IMR-90 (cell line): ENCODE measurements at regions of chr7 and their contacts with region 1.

Region 1: DNA sequence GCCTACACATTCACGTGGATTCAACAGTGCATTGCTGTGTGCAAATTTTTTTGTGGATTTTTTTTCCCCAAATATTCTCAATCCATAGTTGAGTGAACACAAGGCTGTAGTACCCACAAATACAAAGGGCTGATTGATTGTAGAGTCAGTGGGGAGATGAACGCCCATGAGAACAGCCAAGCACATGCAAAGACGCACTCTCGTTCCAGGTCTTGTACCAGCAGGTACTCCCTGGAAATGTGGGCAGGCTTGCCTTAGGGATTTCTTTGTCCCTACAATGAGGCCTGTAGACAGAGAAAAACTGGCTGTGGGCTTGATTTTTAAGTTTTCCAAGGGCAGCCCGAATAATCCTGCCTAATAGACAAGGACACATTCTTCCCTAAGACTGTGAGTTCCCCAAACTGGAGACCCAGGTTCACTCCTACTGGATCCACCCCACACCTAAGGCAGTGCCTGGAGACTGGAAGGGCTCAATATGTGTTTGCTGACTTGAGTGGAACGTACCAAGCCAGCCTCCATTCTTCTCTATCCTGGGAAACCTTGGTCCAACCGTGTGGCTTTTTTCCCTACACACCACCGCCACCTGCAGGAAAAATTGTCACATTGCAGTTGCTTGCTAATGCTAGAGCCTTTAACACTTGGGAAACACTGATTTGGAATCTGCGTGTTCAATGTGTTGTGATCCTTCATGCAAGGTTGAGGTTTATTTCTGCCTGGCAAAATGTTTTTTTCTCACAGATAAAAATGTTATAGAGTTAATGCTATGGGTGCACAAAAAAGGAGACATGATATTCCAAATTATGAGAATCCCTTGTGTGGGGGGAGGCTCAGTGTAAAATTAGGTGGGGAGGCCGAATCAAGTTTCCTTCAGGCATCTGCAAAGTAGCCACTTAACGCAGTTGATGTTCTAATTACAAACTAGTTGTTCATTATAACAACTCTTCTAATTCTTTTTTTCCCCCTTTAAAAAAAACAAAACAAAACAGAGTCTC is 49.3 kb downstream of the PPP1R17 start:
- DNase-seq: peak; percentile 51
- ATAC-seq: peak; percentile 99
- H3K4me3 ChIP-seq: no peak overlapping the region
- H3K27ac ChIP-seq: no peak overlapping the region
- H3K4me1 ChIP-seq: no peaks in the 10 kb centered on the region
- H3K27me3 ChIP-seq: no peaks in the 10 kb centered on the region
- CTCF ChIP-seq: peak; percentile 89
- POLR2A ChIP-seq: no peak
- RAD21 ChIP-seq: peak; percentile 83

Region 2: DNA sequence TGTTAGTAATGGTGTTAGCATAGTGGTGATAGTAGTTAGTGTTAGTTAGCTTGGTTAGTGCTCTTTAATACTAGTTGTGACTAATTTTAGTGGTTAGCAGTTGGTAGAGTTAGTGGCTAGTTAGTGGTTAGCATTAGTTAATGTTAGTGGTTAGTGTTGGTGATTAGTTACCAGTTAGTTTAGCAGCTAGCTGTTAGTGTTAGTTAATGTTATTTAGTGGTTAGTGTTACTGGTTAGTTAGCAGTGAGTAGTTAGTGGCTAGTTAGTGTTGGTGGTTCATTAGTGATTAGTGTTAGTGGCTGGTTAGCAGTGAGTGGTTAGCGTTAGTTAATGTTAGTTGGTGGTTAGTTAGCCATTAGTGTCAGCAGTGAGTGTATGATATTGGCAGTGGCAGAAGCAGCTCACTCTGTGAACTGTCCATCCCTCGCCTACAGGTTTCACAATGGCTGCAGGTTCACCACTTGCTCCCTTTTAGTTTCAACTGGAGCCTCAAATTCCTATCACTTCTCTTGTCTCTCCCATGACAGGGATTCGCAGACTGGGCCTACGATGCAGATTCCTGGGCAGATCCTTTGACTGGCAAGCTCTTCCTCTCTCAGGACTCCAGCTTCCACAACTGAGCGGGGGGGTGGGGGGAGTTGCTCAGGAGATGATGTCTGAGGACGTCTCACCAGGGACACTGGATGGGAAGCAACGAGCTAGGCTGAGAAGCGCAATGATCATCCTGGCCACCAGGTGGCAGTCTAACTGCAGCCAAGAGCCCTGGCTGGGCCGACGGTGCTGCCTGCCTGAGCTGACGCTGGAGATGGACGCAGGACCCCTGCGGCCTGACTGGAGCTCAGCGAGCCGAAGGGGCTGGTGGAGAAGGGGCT is 753.0 kb before region 1 on chr7:
- CTCF ChIA-PET with region 1: no interaction called
- POLR2A ChIA-PET with region 1: no interaction called
- dilution Hi-C with region 1: no loop called
- in situ Hi-C with region 1: no loop called
- intact Hi-C with region 1: loop called (anchors 1 kb)
- DNase-seq: peak; percentile 69
- ATAC-seq: peak; percentile 100
- H3K4me3 ChIP-seq: no peak overlapping the region
- H3K27ac ChIP-seq: no peak overlapping the region
- H3K4me1 ChIP-seq: no peaks in the 10 kb centered on the region
- H3K27me3 ChIP-seq: peaks cover 39% of the 10 kb centered on the region
- CTCF ChIP-seq: peak; percentile 86
- POLR2A ChIP-seq: no peak
- RAD21 ChIP-seq: peak; percentile 84

Region 3: DNA sequence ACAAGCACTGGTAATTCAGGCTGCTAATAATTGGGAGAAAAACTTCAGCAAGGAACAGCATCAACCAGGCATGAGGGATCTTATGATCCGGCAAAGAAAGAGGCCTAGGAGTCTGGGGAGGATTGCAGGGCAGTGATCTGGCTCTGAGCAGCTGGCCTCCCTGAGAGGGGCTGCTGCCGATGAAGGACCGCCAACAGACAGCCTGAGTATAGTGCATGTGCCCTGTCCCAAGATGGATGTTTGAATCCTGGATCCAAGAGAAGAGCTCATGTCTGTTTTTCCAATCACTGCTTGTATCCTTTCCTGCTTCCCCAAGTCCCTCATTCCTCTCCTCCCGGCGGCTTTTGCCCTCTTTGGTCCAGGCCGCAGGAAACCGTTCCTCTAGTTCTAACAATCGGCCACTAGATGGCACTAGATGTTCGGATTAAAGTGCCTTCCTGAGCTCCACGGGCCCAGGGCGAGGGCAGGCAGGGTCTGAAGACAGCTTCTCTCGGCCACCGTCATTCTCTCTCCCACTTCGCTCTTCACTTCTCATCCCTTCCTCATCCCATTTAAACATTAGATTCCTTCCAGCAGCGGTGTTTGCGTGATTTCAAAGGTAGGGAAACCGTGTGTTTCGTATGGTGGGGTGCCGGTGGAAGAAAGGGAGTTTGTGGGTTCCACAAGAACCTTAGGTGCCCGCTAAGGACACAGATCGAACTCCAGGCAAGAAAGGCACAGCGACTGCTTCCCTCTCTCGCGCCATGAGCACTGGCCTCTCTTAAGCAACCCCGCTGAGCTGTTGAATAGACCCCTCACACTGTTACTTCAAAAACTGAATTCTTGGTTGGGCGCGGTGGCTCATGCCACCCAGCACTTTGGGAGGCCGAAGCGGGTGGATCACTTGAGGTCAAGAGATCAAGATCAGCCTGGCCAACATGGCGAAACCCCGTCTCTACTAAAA is 601.8 kb before region 1 on chr7:
- CTCF ChIA-PET with region 1: interaction called, 3 read pairs
- POLR2A ChIA-PET with region 1: no interaction called
- dilution Hi-C with region 1: no loop called
- in situ Hi-C with region 1: no loop called
- intact Hi-C with region 1: loop called (anchors 1 kb)
- DNase-seq: peak; percentile 54
- ATAC-seq: peak; percentile 100
- H3K4me3 ChIP-seq: no peak overlapping the region
- H3K27ac ChIP-seq: no peak overlapping the region
- H3K4me1 ChIP-seq: no peaks in the 10 kb centered on the region
- H3K27me3 ChIP-seq: no peaks in the 10 kb centered on the region; the same call in 1 of the 2 replicates
- CTCF ChIP-seq: peak; percentile 68
- POLR2A ChIP-seq: no peak
- RAD21 ChIP-seq: peak; percentile 62

Region 4: DNA sequence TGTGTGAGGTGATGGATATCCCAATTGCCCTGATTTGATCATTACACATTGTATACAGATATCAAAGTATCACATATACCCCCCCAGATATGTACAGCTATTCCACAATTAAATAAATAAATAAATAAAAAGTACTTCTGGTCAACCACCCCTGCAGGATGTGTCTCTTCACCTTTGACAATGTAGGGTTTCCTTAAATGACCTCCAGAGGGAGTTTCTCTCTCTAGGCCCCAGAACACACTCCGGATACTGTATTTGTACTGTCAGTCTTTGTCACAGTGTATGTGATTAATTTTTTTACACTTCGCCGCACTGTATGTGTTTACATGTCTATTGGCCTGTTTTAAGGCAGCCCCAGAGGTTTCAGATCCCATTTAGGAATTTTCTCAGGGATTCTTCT is 560.6 kb before region 1 on chr7:
- CTCF ChIA-PET with region 1: no interaction called
- POLR2A ChIA-PET with region 1: no interaction called
- dilution Hi-C with region 1: no loop called
- in situ Hi-C with region 1: no loop called
- intact Hi-C with region 1: no loop called
- DNase-seq: no peak
- ATAC-seq: no peak
- H3K4me3 ChIP-seq: no peak overlapping the region
- H3K27ac ChIP-seq: no peak overlapping the region
- H3K4me1 ChIP-seq: no peaks in the 10 kb centered on the region
- H3K27me3 ChIP-seq: no peaks in the 10 kb centered on the region
- CTCF ChIP-seq: no peak
- POLR2A ChIP-seq: no peak
- RAD21 ChIP-seq: no peak

Region 5: DNA sequence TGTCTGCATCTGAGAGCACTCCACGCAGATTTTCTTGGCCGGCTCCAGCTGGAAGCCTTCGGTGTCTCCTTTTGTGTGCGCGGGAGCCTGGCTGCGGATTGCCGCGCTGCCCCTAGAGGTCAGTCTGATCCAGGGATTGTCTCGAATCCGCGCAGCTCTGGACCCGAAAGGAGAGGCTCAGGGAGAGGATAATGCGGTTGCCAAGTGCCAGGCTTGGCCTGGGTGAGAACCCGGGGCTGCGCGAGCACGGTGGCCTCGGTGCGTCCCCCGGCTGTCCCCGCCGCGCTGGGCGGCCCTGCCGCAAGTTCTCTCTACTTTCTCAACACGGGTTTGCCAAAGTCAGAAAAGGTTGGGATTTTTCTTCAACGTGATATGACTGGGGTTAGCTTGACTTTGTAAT is 543.3 kb before region 1 on chr7:
- CTCF ChIA-PET with region 1: no interaction called
- POLR2A ChIA-PET with region 1: no interaction called
- dilution Hi-C with region 1: no loop called
- in situ Hi-C with region 1: no loop called
- intact Hi-C with region 1: loop called (anchors 5 kb)
- DNase-seq: peak; percentile 16
- ATAC-seq: peak; percentile 99
- H3K4me3 ChIP-seq: no peak overlapping the region
- H3K27ac ChIP-seq: no peak overlapping the region
- H3K4me1 ChIP-seq: no peaks in the 10 kb centered on the region
- H3K27me3 ChIP-seq: no peaks in the 10 kb centered on the region
- CTCF ChIP-seq: peak; percentile 50
- POLR2A ChIP-seq: no peak
- RAD21 ChIP-seq: peak; percentile 48

Region 6: DNA sequence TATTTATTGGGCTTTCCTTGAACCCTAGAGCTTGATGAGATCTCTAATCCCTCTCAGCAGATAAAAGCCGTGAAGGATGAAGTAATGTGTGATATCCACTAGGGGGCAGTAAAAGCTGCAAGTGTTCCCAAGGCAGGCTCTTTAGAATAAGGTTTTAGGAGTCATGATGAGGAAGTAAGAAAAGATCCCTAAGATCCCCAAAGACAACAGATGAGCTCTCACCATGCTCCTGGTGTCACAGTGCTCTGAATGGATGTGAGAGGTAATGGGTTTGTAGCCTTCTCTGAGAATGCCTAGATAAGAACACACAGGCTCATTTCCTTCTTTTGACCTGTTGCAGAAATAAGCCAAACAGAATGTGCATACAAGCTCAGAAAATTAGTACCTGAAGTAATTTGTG is 292.8 kb before region 1 on chr7:
- CTCF ChIA-PET with region 1: no interaction called
- POLR2A ChIA-PET with region 1: no interaction called
- dilution Hi-C with region 1: no loop called
- in situ Hi-C with region 1: loop called (anchors 10 kb)
- intact Hi-C with region 1: loop called (anchors 1 kb)
- DNase-seq: peak; percentile 45
- ATAC-seq: peak; percentile 81
- H3K4me3 ChIP-seq: no peak overlapping the region
- H3K27ac ChIP-seq: no peak overlapping the region
- H3K4me1 ChIP-seq: no peaks in the 10 kb centered on the region
- H3K27me3 ChIP-seq: no peaks in the 10 kb centered on the region
- CTCF ChIP-seq: peak; percentile 67
- POLR2A ChIP-seq: no peak
- RAD21 ChIP-seq: peak; percentile 58

Region 7: DNA sequence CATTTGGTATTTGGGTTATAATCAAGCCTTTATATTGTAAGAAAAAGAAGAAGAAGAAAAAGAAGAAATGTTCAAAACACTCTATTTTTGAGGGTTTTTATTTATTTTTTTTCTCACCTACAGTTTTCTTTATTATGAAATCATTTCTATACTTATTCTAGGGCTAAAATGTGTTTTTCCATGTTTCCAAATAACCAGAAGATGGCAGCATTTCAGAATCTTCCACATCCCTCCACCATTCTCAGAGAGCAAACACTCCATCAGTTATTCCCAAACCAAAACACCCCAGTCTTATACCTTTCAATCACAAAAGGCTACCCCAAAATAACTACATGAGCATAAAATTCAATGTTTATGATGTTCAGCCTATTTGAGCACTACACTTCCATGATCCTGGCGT is 88.0 kb before region 1 on chr7:
- CTCF ChIA-PET with region 1: no interaction called
- POLR2A ChIA-PET with region 1: no interaction called
- dilution Hi-C with region 1: no loop called
- in situ Hi-C with region 1: no loop called
- intact Hi-C with region 1: loop called (anchors 1 kb)
- DNase-seq: peak; percentile 1
- ATAC-seq: no peak
- H3K4me3 ChIP-seq: no peak overlapping the region
- H3K27ac ChIP-seq: no peak overlapping the region
- H3K4me1 ChIP-seq: no peaks in the 10 kb centered on the region
- H3K27me3 ChIP-seq: no peaks in the 10 kb centered on the region; the same call in 1 of the 2 replicates
- CTCF ChIP-seq: peak; percentile 27; the same call in 1 of the 2 replicates
- POLR2A ChIP-seq: no peak
- RAD21 ChIP-seq: peak; percentile 23; the same call in 1 of the 2 replicates

Region 8: DNA sequence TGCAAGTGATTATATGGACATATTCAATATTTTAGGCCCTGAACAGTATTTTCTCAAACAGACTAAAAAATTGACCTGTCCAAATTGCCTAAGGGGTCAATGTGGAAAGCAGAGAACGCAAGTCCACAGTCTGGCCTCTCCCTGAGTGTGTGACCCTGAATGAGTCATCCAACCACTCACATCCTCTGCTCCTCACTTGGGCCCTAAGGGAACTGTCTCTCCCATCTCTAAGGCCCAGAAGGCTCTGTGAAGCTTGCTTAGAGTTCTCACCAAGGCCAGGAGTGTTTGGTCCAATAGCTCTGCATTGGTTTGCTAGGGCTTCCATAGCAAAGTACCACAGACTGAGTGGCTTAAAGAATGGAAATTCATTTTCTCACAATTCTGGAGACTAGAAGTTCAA is 598.8 kb after region 1 on chr7:
- CTCF ChIA-PET with region 1: interaction called, 10 read pairs
- POLR2A ChIA-PET with region 1: no interaction called
- dilution Hi-C with region 1: no loop called
- in situ Hi-C with region 1: loop called (anchors 10 kb)
- intact Hi-C with region 1: no loop called
- DNase-seq: peak; percentile 2
- ATAC-seq: no peak
- H3K4me3 ChIP-seq: no peak overlapping the region
- H3K27ac ChIP-seq: no peak overlapping the region
- H3K4me1 ChIP-seq: no peaks in the 10 kb centered on the region
- H3K27me3 ChIP-seq: no peaks in the 10 kb centered on the region
- CTCF ChIP-seq: no peak
- POLR2A ChIP-seq: no peak
- RAD21 ChIP-seq: no peak